WTC11 (cell line): ENCODE measurements at regions of chr6 and their contacts with region 1.

Region 1: GRCh38 chr6:52577022-52577777 is at the start of gene TRAM2:
- DNase-seq: peak; percentile 82
- ATAC-seq: peak; percentile 71
- H3K4me3 Mint-ChIP-seq: peak within 1 kb of the TSS; percentile 90
- H3K27ac Mint-ChIP-seq: peak within 1 kb of the TSS; percentile 100
- H3K4me1 Mint-ChIP-seq: peaks cover 45% of the 10 kb centered on the region
- H3K27me3 Mint-ChIP-seq: peaks cover 3% of the 10 kb centered on the region; the same call in 1 of the 2 replicates
- CTCF ChIP-seq: no peak
- total RNA-seq, gene TRAM2: 13.4 to 14.4 TPM (median 13.5 TPM) in 3 replicates

Region 2: DNA sequence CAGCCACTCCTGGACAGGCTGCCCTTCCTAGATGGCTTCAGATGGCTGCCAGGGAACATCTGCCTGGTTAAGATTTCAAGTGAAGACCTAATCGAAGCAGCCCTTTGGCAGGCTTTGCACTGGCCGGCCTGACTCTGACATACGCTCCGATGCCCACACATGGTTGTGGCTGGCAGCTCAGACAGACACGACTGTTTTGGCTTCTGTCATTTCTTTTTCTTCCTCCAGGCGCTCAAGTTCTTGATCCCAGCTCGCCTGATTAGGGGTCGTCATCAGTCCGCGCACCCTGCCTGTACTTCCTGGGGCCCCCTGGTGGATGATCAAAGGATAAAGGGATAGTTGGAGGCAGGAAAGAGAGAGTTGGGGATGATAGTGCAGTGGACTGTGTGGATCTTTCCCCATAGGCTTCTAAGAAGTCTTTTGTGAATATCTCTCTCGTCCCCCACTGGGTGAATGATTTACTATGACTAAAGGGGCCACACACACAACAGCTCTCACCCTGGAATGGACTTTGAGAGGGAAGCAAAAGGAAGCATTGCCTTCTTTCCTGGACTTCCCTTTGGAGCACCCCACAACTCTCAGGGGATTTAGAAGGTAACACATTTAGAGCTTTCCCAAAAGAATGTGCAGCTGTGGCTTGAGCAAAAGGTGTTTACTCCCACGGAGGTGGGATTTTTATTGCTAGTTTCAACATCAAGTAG is 21.1 kb after region 1 on chr6:
- CTCF ChIA-PET with region 1: interaction called, 17 read pairs
- POLR2A ChIA-PET with region 1: interaction called, 4 read pairs
- DNase-seq: peak; percentile 86
- ATAC-seq: peak; percentile 82
- H3K4me3 Mint-ChIP-seq: peak overlapping the region; percentile 43
- H3K27ac Mint-ChIP-seq: peak overlapping the region; percentile 34; the same call in 1 of the 2 replicates
- H3K4me1 Mint-ChIP-seq: peaks cover 22% of the 10 kb centered on the region
- H3K27me3 Mint-ChIP-seq: no peaks in the 10 kb centered on the region; the same call in 1 of the 2 replicates
- CTCF ChIP-seq: 0 out of 2 replicates have a peak, but pooled peaks have one; percentile 55

Region 3: GRCh38 chr6:52612336-52613054 is 35.3 kb after region 1 on chr6:
- CTCF ChIA-PET with region 1: no interaction called
- POLR2A ChIA-PET with region 1: no interaction called
- DNase-seq: no peak
- ATAC-seq: no peak
- H3K4me3 Mint-ChIP-seq: no peak overlapping the region
- H3K27ac Mint-ChIP-seq: no peak overlapping the region
- H3K4me1 Mint-ChIP-seq: peaks cover 11% of the 10 kb centered on the region
- H3K27me3 Mint-ChIP-seq: no peaks in the 10 kb centered on the region
- CTCF ChIP-seq: no peak